Sigmoid colon (tissue), 7 donors: ENCODE measurements at regions of chr2 and their contacts with region 1.

Region 1: DNA sequence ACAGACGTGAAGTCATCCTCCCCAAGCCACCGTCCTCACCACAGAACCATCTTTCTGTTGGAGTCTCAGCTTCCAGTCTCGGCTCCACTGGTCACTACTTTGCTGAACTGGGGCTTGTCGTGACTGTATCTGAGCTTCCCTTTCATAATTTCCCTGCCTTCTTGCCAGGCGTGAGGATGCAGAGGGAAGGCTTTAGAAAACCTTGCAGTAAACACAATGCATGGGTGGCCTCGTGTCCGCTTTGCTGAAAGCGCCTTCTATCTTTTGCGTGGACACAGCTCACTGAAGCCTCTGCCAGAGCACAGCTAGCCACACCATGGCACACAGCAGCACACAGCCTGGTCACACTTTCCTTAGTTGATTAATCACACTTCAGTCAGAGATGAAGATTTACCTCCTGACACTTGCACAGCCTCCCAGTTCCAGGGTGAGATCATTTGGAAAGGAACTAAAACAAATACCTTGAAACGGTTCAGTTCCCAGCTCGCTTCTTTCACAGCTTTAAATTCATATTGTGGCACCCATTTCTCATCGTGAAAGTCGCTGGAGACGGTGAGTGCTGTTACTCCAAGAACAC is 2.8 kb upstream of the GPR45 start:
- DNase-seq: no peak
- H3K4me3 ChIP-seq: no peak overlapping the region
- H3K27ac ChIP-seq: no peak overlapping the region
- H3K4me1 ChIP-seq: peaks cover 0 to 9% (median 0%) of the 10 kb centered on the region in 4 donors
- H3K27me3 ChIP-seq: peaks cover 0 to 10% (median 0%) of the 10 kb centered on the region in 3 donors
- CTCF ChIP-seq: no peak
- EP300 ChIP-seq: no peak
- POLR2A ChIP-seq: no peak

Region 2: GRCh38 chr2:104702451-104702850 is 536.3 kb before region 1 on chr2:
- intact Hi-C with region 1: no loop called
- DNase-seq: no peak
- H3K4me3 ChIP-seq: no peak overlapping the region
- H3K27ac ChIP-seq: no peak overlapping the region
- H3K4me1 ChIP-seq: no peaks in the 10 kb centered on the region
- H3K27me3 ChIP-seq: peaks cover 0 to 4% (median 0%) of the 10 kb centered on the region in 3 donors
- CTCF ChIP-seq: no peak
- EP300 ChIP-seq: no peak
- POLR2A ChIP-seq: no peak

Region 3: GRCh38 chr2:105114551-105114950 is 124.2 kb before region 1 on chr2:
- intact Hi-C with region 1: loop called (anchors 1 kb)
- DNase-seq: no peak
- H3K4me3 ChIP-seq: no peak overlapping the region
- H3K27ac ChIP-seq: no peak overlapping the region
- H3K4me1 ChIP-seq: no peaks in the 10 kb centered on the region
- H3K27me3 ChIP-seq: peaks cover 0 to 4% (median 0%) of the 10 kb centered on the region in 3 donors
- CTCF ChIP-seq: peak in 3 of 4 experiments; percentile 31 to 73 (median 71)
- EP300 ChIP-seq: no peak
- POLR2A ChIP-seq: no peak